Caco-2 (cell line): ENCODE measurements at regions of chrX and their contacts with region 1.

Region 1: DNA sequence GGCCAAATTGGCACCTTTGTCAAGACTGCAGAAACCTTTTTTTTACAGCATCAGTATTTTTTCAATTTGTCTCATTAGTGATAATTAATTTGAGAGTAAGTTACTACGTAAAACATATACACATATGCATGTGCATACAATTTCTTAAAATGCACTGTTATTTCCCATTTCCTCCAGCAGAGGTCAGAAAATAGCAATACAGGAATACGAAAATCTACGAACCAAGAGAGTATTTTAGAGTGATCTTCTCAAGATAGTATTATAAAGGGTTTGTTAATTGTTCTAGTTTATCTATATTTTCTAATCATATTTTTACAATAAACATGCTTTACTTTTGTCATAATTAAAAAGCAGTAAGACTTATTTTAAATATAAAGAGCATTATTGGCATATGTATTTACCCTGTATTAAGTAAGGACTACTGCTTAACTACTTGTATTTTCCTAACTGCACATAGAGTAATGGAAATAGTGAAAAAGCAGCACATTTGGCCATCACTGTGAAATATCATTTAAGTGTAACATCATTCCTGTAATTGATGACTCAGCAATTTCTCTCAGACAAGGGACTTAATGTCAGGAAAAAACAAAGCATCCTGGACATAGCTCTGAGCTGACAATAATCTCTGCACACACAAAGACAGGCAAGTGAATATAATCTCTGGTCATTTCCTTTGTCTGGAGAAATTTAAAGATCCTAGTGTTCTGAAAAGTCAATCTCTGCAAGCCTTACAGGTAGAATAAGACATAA is 45.6 kb downstream of the MAOB start:
- DNase-seq: peak in 1 of 2 experiments; percentile 5
- H3K4me3 ChIP-seq: no peak overlapping the region
- H3K4me3 Mint-ChIP-seq: no peak overlapping the region
- H3K27ac Mint-ChIP-seq: no peak overlapping the region
- H3K4me1 ChIP-seq: no peaks in the 10 kb centered on the region
- H3K4me1 Mint-ChIP-seq: no peaks in the 10 kb centered on the region
- H3K27me3 ChIP-seq: no peaks in the 10 kb centered on the region
- H3K27me3 Mint-ChIP-seq: peaks cover 10% of the 10 kb centered on the region
- CTCF ChIP-seq: peak; percentile 42 to 57

Region 2: GRCh38 chrX:43939187-43939926 is 102.7 kb after region 1 on chrX:
- CTCF ChIA-PET with region 1: no interaction called
- POLR2A ChIA-PET with region 1: no interaction called
- intact Hi-C with region 1: loop called (anchors 1 kb)
- DNase-seq: no peak
- H3K4me3 ChIP-seq: no peak overlapping the region
- H3K4me3 Mint-ChIP-seq: no peak overlapping the region
- H3K27ac Mint-ChIP-seq: no peak overlapping the region
- H3K4me1 ChIP-seq: no peaks in the 10 kb centered on the region
- H3K4me1 Mint-ChIP-seq: no peaks in the 10 kb centered on the region
- H3K27me3 ChIP-seq: no peaks in the 10 kb centered on the region
- H3K27me3 Mint-ChIP-seq: peaks cover 8% of the 10 kb centered on the region
- CTCF ChIP-seq: no peak

Region 3: DNA sequence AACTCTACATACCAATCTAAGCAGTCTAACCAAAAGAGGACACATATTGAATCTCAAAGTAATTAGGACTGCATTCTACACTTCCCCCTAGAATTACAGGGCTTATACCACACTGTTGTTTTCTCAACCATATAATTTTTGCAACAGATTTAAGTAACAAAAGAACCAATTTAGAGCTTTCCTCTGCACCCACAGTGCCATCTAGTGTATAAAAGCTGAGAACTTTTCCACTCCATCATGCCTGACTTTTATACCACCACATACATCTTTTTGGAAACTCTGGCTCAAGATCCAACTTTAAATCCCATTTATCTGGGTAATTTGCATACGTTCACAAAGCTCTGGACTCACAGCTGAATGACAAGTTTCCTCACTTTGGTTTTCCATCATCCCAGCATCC is 407.4 kb after region 1 on chrX:
- CTCF ChIA-PET with region 1: no interaction called
- POLR2A ChIA-PET with region 1: no interaction called
- intact Hi-C with region 1: loop called (anchors 5 kb)
- DNase-seq: peak in 1 of 2 experiments; percentile 13
- H3K4me3 ChIP-seq: no peak overlapping the region
- H3K4me3 Mint-ChIP-seq: no peak overlapping the region
- H3K27ac Mint-ChIP-seq: no peak overlapping the region
- H3K4me1 ChIP-seq: no peaks in the 10 kb centered on the region
- H3K4me1 Mint-ChIP-seq: peaks cover 7% of the 10 kb centered on the region
- H3K27me3 ChIP-seq: no peaks in the 10 kb centered on the region
- H3K27me3 Mint-ChIP-seq: peaks cover 3% of the 10 kb centered on the region
- CTCF ChIP-seq: peak; percentile 16 to 23